Activated CD4-positive, alpha-beta memory T cell treated with anti-CD3 and anti-CD28 coated beads for 36 hours (primary cell): ENCODE measurements at regions of chr2 and their contacts with region 1.

Region 1: GRCh38 chr2:46062637-46063412 is 234.4 kb upstream of the EPAS1 start:
- DNase-seq: peak; percentile 80
- H3K4me3 Mint-ChIP-seq: no peak overlapping the region
- H3K27ac Mint-ChIP-seq: no peak overlapping the region
- H3K4me1 Mint-ChIP-seq: peaks cover 21% of the 10 kb centered on the region
- H3K27me3 Mint-ChIP-seq: no peaks in the 10 kb centered on the region

Region 2: DNA sequence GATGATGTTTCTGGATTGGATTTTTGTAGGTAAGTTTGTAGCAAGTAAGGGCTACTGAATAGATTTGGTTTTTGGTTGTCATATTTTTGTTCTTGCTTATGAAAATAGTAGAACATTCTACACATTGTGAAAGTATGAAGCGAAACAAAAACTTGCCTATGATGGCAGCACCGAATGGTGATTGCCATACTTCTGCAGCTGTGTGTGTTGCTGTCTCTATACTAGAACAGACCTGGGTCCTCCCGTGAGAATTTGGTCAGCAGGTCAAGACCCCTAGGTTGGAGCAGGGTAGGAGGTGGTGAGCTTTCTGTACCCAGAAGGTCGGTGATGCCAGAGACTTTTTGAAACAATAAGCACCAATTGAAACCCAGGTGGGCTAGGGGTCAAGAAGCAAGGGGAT is 88.8 kb before region 1 on chr2:
- CTCF ChIA-PET with region 1: no interaction called
- POLR2A ChIA-PET with region 1: no interaction called
- intact Hi-C with region 1: no loop called
- DNase-seq: no peak
- H3K4me3 Mint-ChIP-seq: no peak overlapping the region
- H3K27ac Mint-ChIP-seq: no peak overlapping the region
- H3K4me1 Mint-ChIP-seq: no peaks in the 10 kb centered on the region
- H3K27me3 Mint-ChIP-seq: no peaks in the 10 kb centered on the region

Region 3: GRCh38 chr2:46010925-46011490 is 51.8 kb before region 1 on chr2:
- CTCF ChIA-PET with region 1: interaction called, 20 read pairs
- POLR2A ChIA-PET with region 1: no interaction called
- intact Hi-C with region 1: no loop called
- DNase-seq: no peak
- H3K4me3 Mint-ChIP-seq: no peak overlapping the region
- H3K27ac Mint-ChIP-seq: no peak overlapping the region
- H3K4me1 Mint-ChIP-seq: peaks cover 11% of the 10 kb centered on the region
- H3K27me3 Mint-ChIP-seq: no peaks in the 10 kb centered on the region

Region 4: GRCh38 chr2:46041434-46041833 is 21.4 kb before region 1 on chr2:
- CTCF ChIA-PET with region 1: interaction called, 12 read pairs
- POLR2A ChIA-PET with region 1: no interaction called
- intact Hi-C with region 1: no loop called
- DNase-seq: no peak
- H3K4me3 Mint-ChIP-seq: no peak overlapping the region
- H3K27ac Mint-ChIP-seq: peak overlapping the region; percentile 66
- H3K4me1 Mint-ChIP-seq: peaks cover 27% of the 10 kb centered on the region
- H3K27me3 Mint-ChIP-seq: no peaks in the 10 kb centered on the region

Region 5: DNA sequence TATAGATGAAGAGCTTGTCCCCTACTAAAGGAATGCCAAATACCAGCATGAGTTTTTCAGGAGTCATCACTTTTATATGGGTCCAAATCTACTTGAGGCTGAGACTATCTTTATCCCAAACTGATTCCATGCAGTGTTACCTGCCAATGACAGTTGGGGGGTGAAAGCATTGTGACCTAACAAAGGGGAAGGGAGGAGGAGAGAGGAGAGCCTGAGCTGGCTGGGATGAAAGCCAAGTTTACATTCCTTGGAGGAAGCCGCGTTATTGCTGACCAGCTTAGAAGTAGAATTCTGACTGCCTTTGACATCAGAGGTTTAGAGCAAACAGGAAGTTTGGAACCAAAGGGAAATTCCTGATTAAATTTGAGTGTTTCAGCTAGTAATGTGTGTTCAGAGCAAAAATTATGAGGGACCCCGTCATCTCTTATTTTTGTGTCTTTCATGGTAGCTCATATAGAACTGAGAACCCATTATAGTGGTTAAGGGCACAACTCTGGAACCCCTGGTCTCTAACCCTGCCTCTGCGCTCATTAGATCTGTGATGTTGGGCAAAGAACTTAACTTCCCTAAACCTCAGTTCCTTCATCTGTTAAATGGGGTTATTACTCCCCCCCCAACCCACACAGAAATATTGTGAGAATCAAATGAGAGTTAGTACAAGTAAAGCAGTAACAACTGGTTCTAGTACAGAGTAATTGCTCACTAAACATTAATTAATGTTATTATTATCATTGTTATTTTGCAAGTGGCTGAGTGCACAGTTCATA is 35.1 kb after region 1 on chr2:
- CTCF ChIA-PET with region 1: interaction called, 10 read pairs
- POLR2A ChIA-PET with region 1: no interaction called
- intact Hi-C with region 1: loop called (anchors 2 kb)
- DNase-seq: no peak
- H3K4me3 Mint-ChIP-seq: no peak overlapping the region
- H3K27ac Mint-ChIP-seq: no peak overlapping the region
- H3K4me1 Mint-ChIP-seq: peaks cover 18% of the 10 kb centered on the region
- H3K27me3 Mint-ChIP-seq: no peaks in the 10 kb centered on the region

Region 6: GRCh38 chr2:46268196-46268595 is 205.4 kb after region 1 on chr2:
- CTCF ChIA-PET with region 1: interaction called, 12 read pairs
- POLR2A ChIA-PET with region 1: no interaction called
- intact Hi-C with region 1: no loop called
- DNase-seq: no peak
- H3K4me3 Mint-ChIP-seq: no peak overlapping the region
- H3K27ac Mint-ChIP-seq: no peak overlapping the region
- H3K4me1 Mint-ChIP-seq: peaks cover 15% of the 10 kb centered on the region
- H3K27me3 Mint-ChIP-seq: peaks cover 2% of the 10 kb centered on the region

Region 7: GRCh38 chr2:46410273-46411247 is 347.7 kb after region 1 on chr2:
- CTCF ChIA-PET with region 1: no interaction called
- POLR2A ChIA-PET with region 1: no interaction called
- intact Hi-C with region 1: no loop called
- DNase-seq: no peak
- H3K4me3 Mint-ChIP-seq: no peak overlapping the region
- H3K27ac Mint-ChIP-seq: no peak overlapping the region
- H3K4me1 Mint-ChIP-seq: no peaks in the 10 kb centered on the region
- H3K27me3 Mint-ChIP-seq: peaks cover 1% of the 10 kb centered on the region

Region 8: DNA sequence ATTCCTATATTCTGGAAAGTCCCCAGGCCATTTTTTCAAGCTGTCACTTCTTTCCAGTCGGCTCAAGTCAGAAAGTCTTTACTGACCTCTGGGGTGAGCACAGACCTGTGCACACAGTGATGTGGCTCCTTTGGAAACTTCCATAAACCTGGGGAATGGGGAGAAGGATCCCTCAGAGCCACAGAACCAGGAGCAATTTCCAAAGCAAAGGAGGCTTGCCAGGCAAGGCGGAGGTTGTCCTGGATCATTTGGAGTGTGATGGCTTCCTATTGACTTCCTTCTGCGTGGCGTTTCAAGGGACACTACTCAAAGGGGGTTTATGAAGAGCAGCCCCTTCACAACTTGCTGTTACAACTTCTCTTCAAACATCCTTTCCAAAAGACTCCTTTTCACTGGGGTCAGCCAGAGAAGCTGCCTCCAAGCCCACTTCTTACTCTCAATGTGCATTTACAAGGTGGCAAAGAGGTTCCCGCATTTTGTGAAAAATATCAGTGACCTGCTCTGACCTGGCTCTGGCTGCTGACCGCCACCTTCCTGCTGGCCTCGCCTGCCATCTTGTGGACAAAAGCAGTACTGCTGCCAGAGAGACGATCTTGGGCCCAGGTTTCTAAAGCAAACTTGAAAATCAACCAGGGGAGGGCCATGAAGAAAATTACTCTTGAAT is 398.3 kb after region 1 on chr2:
- CTCF ChIA-PET with region 1: interaction called, 12 read pairs
- POLR2A ChIA-PET with region 1: no interaction called
- intact Hi-C with region 1: loop called (anchors 2 kb)
- DNase-seq: peak; percentile 85
- H3K4me3 Mint-ChIP-seq: no peak overlapping the region
- H3K27ac Mint-ChIP-seq: no peak overlapping the region
- H3K4me1 Mint-ChIP-seq: peaks cover 7% of the 10 kb centered on the region
- H3K27me3 Mint-ChIP-seq: no peaks in the 10 kb centered on the region